Mammary epithelial cell (primary cell): ENCODE measurements at regions of chr3 and their contacts with region 1.

Region 1: DNA sequence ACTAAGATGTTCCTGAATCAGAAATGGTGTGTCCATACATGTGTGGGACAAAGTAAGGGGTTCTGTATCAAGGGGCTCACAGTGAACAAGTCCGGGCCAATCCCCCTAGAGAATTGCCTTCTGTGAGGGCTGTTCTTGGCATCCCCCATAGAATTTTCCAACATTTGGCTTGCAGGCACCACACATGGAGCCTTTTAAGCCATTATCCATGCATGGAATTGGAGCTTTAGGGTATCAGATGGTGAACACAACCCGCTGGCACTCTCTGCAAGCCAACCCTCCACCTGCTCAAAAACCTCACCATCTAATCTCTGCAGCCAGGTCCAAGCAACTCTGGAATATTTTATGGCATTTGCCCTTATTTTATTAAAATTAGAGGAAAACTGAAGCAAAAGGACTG is 278.7 kb downstream of the ERC2 start:
- DNase-seq: no peak
- H3K4me3 ChIP-seq: no peak overlapping the region
- H3K27ac ChIP-seq: no peak overlapping the region
- H3K4me1 ChIP-seq: no peaks in the 10 kb centered on the region
- H3K27me3 ChIP-seq: no peaks in the 10 kb centered on the region
- CTCF ChIP-seq: no peak

Region 2: DNA sequence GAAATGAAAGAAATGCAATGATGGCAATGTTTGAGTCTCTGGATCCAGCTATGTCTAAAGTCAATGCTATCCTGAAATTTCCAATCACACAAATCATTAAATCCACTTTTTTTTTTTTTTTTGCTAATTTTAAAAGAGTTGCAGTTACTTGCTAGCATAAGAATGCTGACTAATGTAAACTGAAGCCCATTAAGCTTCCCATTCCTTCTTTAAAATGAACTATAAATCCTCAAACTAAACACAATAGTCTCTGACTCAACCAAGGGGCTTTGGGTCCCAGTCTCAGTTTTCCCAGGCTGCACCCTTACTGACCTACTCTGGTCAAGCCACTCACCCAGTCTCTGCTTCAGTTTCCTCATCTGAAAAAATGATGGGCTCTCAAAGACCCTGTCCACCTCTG is 82.4 kb before region 1 on chr3:
- CTCF ChIA-PET with region 1: no interaction called
- dilution Hi-C with region 1: loop called (anchors 5 kb)
- in situ Hi-C with region 1: no loop called
- intact Hi-C with region 1: no loop called
- DNase-seq: no peak
- H3K4me3 ChIP-seq: no peak overlapping the region
- H3K27ac ChIP-seq: no peak overlapping the region
- H3K4me1 ChIP-seq: no peaks in the 10 kb centered on the region
- H3K27me3 ChIP-seq: no peaks in the 10 kb centered on the region
- CTCF ChIP-seq: no peak

Region 3: GRCh38 chr3:56761887-56762651 is 572.5 kb after region 1 on chr3:
- CTCF ChIA-PET with region 1: no interaction called
- dilution Hi-C with region 1: no loop called
- in situ Hi-C with region 1: no loop called
- intact Hi-C with region 1: no loop called
- DNase-seq: no peak
- H3K4me3 ChIP-seq: no peak overlapping the region
- H3K27ac ChIP-seq: no peak overlapping the region
- H3K4me1 ChIP-seq: peaks cover 9% of the 10 kb centered on the region
- H3K27me3 ChIP-seq: no peaks in the 10 kb centered on the region
- CTCF ChIP-seq: no peak